ENCODE measurements at regions of chr5 and their contacts with region 1.

Region 1: DNA sequence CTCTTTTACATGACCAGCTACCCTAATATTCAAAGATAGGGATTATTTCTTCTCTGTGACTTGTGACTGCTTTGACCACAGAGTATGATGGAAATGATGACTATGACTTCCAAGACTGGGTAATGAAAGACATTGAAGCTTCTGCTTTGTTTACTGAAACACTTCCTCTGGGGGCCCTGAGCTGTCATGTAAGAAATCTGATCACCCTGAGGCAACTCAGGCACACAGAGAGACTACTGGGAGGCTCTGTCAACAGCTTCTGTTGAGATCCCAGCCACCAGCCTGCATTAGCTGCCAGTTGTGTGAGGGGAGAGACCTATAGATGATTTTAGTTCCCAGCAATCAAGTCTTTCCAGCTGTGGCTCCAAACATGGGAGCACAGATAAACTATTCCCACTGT is 76.5 kb downstream of the KCTD16 start:
- DNase-seq: no peak

Region 2: GRCh38 chr5:144089401-144090021 is 157.6 kb before region 1 on chr5:
- intact Hi-C with region 1: loop called in 1 of 2 experiments (anchors 5 kb)
- DNase-seq: no peak

Region 3: DNA sequence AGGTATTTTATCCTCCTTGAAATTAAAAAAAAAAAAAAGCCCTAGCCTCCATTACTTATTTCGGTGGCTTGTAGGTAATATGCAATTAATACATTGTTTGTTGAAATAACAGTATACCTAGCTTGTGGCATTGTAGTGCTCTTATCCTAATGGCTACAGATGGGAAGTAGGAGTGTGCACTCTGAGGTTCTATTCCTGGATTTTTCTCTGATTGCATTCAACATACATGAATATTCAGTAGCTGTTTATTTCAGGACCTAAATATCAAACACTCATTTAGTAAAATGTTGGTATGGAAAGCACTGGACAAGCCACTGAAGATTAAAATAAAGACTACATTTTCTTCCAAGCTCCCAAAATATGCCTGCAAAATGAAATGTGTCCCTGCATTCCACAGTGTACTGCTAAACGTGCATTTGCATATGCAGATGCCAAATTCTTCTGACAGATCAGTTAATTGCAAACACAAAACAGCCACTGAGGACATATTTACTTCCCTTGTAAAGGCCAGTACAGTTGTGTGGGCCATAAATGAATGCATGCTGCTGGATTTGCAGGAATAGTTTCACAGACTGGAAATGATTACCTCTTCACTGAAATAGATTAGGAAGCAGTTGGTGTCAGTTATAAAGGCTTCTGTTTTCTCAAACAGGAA is 761.9 kb after region 1 on chr5:
- intact Hi-C with region 1: no loop called
- DNase-seq: no peak